ENCODE measurements at regions of chr12 and their contacts with region 1.

Region 1: GRCh38 chr12:29545102-29545467 is 47.6 kb upstream of the OVCH1 start:
- DNase-seq: no peak
- ATAC-seq: peak; percentile 84
- H3K4me3 ChIP-seq: no peak overlapping the region
- H3K27ac ChIP-seq: no peak overlapping the region
- H3K4me1 ChIP-seq: peaks cover 5% of the 10 kb centered on the region
- H3K27me3 ChIP-seq: no peaks in the 10 kb centered on the region
- CTCF ChIP-seq: no peak
- EP300 ChIP-seq: no peak
- POLR2A ChIP-seq: no peak
- RAD21 ChIP-seq: no peak

Region 2: GRCh38 chr12:29534935-29535334 is 10.2 kb before region 1 on chr12:
- CTCF ChIA-PET with region 1: interaction called, 8 read pairs
- POLR2A ChIA-PET with region 1: interaction called, 3 read pairs
- RAD21 ChIA-PET with region 1: interaction called, 14 read pairs
- SMC1A ChIA-PET with region 1: interaction called, 15 read pairs
- in situ Hi-C with region 1: no loop called
- intact Hi-C with region 1: no loop called
- DNase-seq: no peak
- ATAC-seq: peak; percentile 26; the same call in 2 of the 3 replicates
- H3K4me3 ChIP-seq: no peak overlapping the region
- H3K27ac ChIP-seq: no peak overlapping the region
- H3K4me1 ChIP-seq: no peaks in the 10 kb centered on the region
- H3K27me3 ChIP-seq: no peaks in the 10 kb centered on the region
- CTCF ChIP-seq: no peak
- EP300 ChIP-seq: no peak
- POLR2A ChIP-seq: no peak
- RAD21 ChIP-seq: no peak

Measured in GM12878 (cell line).